CD8-positive, alpha-beta T cell (primary cell): ENCODE measurements at regions of chr5 and their contacts with region 1.

Region 1: DNA sequence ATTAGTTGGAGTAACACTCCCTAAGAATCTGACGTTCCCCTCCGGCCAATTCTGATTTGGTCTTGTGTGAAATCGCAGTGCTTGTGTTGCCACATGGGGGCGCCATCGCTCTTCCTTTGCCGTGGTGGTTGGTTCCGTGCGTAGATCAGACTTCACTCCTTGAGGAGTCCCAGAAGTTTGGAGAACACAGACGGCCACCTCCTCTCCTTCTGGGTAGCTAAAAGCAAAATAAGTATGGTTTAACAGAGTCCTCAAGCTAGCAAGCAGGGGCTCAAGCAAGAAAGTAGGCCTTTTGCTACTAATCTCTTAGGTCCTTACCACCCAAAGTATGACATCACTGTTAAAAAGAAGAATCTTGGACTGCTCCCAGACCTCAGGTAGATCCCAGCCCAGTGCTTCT is 59.5 kb downstream of the HSPA4 start:
- DNase-seq: peak; percentile 55 to 89 (median 79)
- ATAC-seq: peak; percentile 62
- H3K4me3 ChIP-seq: no peak overlapping the region
- H3K4me3 Mint-ChIP-seq: peak overlapping the region; percentile 29
- H3K27ac ChIP-seq: no peak overlapping the region
- H3K27ac Mint-ChIP-seq: no peak overlapping the region
- H3K4me1 ChIP-seq: peaks cover 16% of the 10 kb centered on the region
- H3K4me1 Mint-ChIP-seq: peaks cover 25% of the 10 kb centered on the region
- H3K27me3 ChIP-seq: no peaks in the 10 kb centered on the region
- H3K27me3 Mint-ChIP-seq: no peaks in the 10 kb centered on the region
- CTCF ChIP-seq: peak; percentile 84

Region 2: GRCh38 chr5:133192716-133193115 is 81.4 kb after region 1 on chr5:
- CTCF ChIA-PET with region 1: interaction called, 11 read pairs
- POLR2A ChIA-PET with region 1: no interaction called
- intact Hi-C with region 1: loop called (anchors 2 kb)
- DNase-seq: no peak
- ATAC-seq: no peak
- H3K4me3 ChIP-seq: no peak overlapping the region
- H3K4me3 Mint-ChIP-seq: no peak overlapping the region
- H3K27ac ChIP-seq: no peak overlapping the region
- H3K27ac Mint-ChIP-seq: no peak overlapping the region
- H3K4me1 ChIP-seq: no peaks in the 10 kb centered on the region
- H3K4me1 Mint-ChIP-seq: no peaks in the 10 kb centered on the region
- H3K27me3 ChIP-seq: no peaks in the 10 kb centered on the region
- H3K27me3 Mint-ChIP-seq: no peaks in the 10 kb centered on the region
- CTCF ChIP-seq: no peak

Region 3: GRCh38 chr5:133260715-133261114 is 149.4 kb after region 1 on chr5:
- CTCF ChIA-PET with region 1: interaction called, 10 read pairs
- POLR2A ChIA-PET with region 1: no interaction called
- intact Hi-C with region 1: no loop called
- DNase-seq: no peak
- ATAC-seq: no peak
- H3K4me3 ChIP-seq: no peak overlapping the region
- H3K4me3 Mint-ChIP-seq: no peak overlapping the region
- H3K27ac ChIP-seq: no peak overlapping the region
- H3K27ac Mint-ChIP-seq: peak overlapping the region; percentile 33
- H3K4me1 ChIP-seq: peaks cover 16% of the 10 kb centered on the region
- H3K4me1 Mint-ChIP-seq: peaks cover 14% of the 10 kb centered on the region
- H3K27me3 ChIP-seq: no peaks in the 10 kb centered on the region
- H3K27me3 Mint-ChIP-seq: no peaks in the 10 kb centered on the region
- CTCF ChIP-seq: no peak

Region 4: GRCh38 chr5:133304707-133305216 is 193.5 kb after region 1 on chr5:
- CTCF ChIA-PET with region 1: interaction called, 10 read pairs
- POLR2A ChIA-PET with region 1: no interaction called
- intact Hi-C with region 1: no loop called
- DNase-seq: no peak
- ATAC-seq: no peak
- H3K4me3 ChIP-seq: no peak overlapping the region
- H3K4me3 Mint-ChIP-seq: no peak overlapping the region
- H3K27ac ChIP-seq: no peak overlapping the region
- H3K27ac Mint-ChIP-seq: no peak overlapping the region
- H3K4me1 ChIP-seq: no peaks in the 10 kb centered on the region
- H3K4me1 Mint-ChIP-seq: no peaks in the 10 kb centered on the region
- H3K27me3 ChIP-seq: no peaks in the 10 kb centered on the region
- H3K27me3 Mint-ChIP-seq: no peaks in the 10 kb centered on the region
- CTCF ChIP-seq: no peak

Region 5: DNA sequence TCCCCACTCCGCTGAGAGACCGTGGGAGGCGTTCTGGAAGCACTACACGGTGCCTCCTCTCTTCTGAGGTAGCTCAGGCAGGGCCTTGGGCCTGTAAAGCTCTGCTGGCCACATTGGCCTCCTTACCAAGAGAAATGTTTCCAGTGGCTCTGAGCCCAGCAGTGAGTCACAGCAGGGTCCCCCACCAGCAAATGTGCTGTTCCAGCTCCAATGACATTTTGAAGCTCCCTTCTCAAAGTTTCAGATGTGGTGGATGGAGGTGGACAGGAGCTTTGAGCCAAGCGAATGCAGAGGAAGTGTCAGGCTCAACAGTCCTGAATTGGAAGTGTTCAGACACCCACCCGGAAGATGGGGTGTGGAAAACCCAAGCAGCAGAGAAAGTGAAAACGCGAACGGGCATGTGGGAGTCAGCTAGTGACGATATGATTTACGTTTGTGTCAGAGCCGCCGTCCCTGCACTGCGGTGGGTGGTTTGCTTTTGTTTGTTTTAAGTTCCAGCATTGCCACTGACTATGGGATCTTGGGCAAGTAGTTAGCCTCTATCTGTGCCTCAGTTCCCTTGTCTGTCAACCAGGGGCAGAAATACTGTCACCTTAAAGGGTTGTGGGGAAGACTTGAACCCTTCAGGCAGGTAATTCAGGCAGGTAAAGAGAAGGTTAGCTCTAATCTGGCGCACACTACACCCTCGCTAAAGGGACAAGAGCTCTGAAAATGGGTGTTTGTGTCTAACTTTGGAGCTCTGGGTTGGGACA is 818.9 kb after region 1 on chr5:
- CTCF ChIA-PET with region 1: no interaction called
- POLR2A ChIA-PET with region 1: no interaction called
- intact Hi-C with region 1: loop called in 1 of 2 experiments (anchors 10 kb)
- DNase-seq: peak; percentile 29 to 79 (median 52)
- ATAC-seq: peak; percentile 83
- H3K4me3 ChIP-seq: peak overlapping the region; percentile 32 to 33
- H3K4me3 Mint-ChIP-seq: peak overlapping the region; percentile 83
- H3K27ac ChIP-seq: peak overlapping the region; percentile 15 to 48
- H3K27ac Mint-ChIP-seq: peak overlapping the region; percentile 88
- H3K4me1 ChIP-seq: peaks cover 14% of the 10 kb centered on the region
- H3K4me1 Mint-ChIP-seq: peaks cover 17% of the 10 kb centered on the region
- H3K27me3 ChIP-seq: no peaks in the 10 kb centered on the region
- H3K27me3 Mint-ChIP-seq: peaks cover 2% of the 10 kb centered on the region
- CTCF ChIP-seq: no peak

Region 6: DNA sequence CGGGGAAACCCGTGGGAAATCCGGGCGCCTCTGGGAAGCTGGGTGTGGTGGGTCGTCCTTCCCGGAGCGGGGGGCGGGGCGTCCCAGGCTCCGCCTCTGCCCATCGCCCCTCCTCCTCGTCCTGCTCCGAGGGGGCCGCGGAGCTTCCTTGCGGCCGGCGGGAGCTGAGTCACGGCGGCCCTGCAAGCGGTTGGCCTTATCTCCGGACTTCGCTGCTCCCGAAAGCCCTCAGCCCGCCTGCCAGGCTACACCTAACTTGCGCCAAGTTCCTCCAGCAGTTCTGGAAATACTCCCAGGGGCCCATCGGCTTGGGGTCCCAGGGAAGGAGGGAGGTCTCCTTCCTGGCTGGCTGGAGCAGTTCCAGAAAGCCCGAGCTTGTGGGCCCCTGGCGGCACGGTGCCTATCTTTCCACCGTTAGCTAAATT is 1354.5 kb after region 1 on chr5:
- CTCF ChIA-PET with region 1: no interaction called
- POLR2A ChIA-PET with region 1: no interaction called
- intact Hi-C with region 1: no loop called
- DNase-seq: peak in 7 of 9 experiments; percentile 33 to 76 (median 48)
- ATAC-seq: peak; percentile 74
- H3K4me3 ChIP-seq: peak overlapping the region; percentile 56 to 78
- H3K4me3 Mint-ChIP-seq: peak overlapping the region; percentile 86
- H3K27ac ChIP-seq: peak overlapping the region; percentile 14 to 46
- H3K27ac Mint-ChIP-seq: peak overlapping the region; percentile 61
- H3K4me1 ChIP-seq: peaks cover 21% of the 10 kb centered on the region
- H3K4me1 Mint-ChIP-seq: peaks cover 17% of the 10 kb centered on the region
- H3K27me3 ChIP-seq: no peaks in the 10 kb centered on the region
- H3K27me3 Mint-ChIP-seq: no peaks in the 10 kb centered on the region
- CTCF ChIP-seq: no peak